G401 (cell line): ENCODE measurements at regions of chr17 and their contacts with region 1.

Region 1: GRCh38 chr17:2064980-2065785 is 10.3 kb downstream of the HIC1 start:
- DNase-seq: no peak

Region 2: GRCh38 chr17:2136241-2136640 is 71.1 kb after region 1 on chr17:
- in situ Hi-C with region 1: no loop called
- DNase-seq: no peak

Region 3: DNA sequence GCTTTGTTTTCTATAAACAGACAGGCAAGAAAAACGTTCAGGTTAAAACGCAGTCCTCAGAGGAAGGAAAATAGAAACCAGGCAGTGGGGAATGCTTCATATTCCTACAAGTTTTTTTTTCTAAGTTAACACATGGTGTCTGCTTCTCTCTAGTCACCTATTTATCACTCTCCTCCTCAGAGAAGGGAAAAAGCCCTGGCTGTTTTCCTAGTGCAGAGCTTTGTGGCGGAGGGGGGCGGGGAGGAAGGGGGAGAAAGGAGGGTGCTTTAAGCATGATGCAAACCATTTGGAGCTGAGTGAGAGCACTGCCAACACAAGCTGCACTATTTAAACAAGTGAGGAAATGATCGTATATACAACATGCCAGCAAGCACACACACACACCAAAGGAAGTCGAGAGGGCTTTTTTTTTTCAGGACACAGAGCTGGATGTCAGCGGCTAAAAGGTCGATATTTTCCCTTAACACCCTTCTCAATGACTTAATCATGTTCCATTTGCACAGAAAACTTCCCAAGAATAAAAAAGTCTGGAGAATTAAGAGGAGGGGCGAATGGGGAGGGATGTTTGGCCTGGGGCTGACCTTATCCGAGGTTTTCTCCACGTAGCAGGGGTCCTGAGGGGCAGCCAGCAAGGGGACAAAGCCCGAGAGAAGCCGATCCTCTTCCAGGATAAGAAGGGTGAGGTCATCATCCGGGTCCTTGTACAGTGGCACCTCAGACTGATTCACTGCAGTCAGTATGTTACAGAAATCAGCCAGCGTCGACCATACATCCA is 107.1 kb after region 1 on chr17:
- in situ Hi-C with region 1: loop called (anchors 5 kb)
- DNase-seq: peak; percentile 70